Activated CD4-positive, alpha-beta T cell treated with anti-CD3 and anti-CD28 coated beads, Interleukin-2, amount 10 ng/mL, durations not matched to agents 24 days and 14 days (primary cell): ENCODE measurements at regions of chr1 and their contacts with region 1.

Region 1: GRCh38 chr1:161117759-161118581 is at the starts of genes NIT1 and PFDN2:
- DNase-seq: peak; percentile 97
- H3K4me3 Mint-ChIP-seq: peak within 1 kb of the TSS; percentile 98
- H3K27ac Mint-ChIP-seq: peak within 1 kb of the TSS; percentile 92
- H3K4me1 Mint-ChIP-seq: peaks cover 61% of the 10 kb centered on the region
- H3K27me3 Mint-ChIP-seq: no peaks in the 10 kb centered on the region
- total RNA-seq, gene NIT1: 46.7 and 48.2 TPM in 2 replicates
- total RNA-seq, gene PFDN2: 173 and 178 TPM in 2 replicates

Region 2: GRCh38 chr1:161080391-161081355 is 37.3 kb before region 1 on chr1:
- intact Hi-C with region 1: no loop called
- DNase-seq: no peak
- H3K4me3 Mint-ChIP-seq: no peak overlapping the region
- H3K27ac Mint-ChIP-seq: no peak overlapping the region
- H3K4me1 Mint-ChIP-seq: peaks cover 8% of the 10 kb centered on the region
- H3K27me3 Mint-ChIP-seq: no peaks in the 10 kb centered on the region

Region 3: DNA sequence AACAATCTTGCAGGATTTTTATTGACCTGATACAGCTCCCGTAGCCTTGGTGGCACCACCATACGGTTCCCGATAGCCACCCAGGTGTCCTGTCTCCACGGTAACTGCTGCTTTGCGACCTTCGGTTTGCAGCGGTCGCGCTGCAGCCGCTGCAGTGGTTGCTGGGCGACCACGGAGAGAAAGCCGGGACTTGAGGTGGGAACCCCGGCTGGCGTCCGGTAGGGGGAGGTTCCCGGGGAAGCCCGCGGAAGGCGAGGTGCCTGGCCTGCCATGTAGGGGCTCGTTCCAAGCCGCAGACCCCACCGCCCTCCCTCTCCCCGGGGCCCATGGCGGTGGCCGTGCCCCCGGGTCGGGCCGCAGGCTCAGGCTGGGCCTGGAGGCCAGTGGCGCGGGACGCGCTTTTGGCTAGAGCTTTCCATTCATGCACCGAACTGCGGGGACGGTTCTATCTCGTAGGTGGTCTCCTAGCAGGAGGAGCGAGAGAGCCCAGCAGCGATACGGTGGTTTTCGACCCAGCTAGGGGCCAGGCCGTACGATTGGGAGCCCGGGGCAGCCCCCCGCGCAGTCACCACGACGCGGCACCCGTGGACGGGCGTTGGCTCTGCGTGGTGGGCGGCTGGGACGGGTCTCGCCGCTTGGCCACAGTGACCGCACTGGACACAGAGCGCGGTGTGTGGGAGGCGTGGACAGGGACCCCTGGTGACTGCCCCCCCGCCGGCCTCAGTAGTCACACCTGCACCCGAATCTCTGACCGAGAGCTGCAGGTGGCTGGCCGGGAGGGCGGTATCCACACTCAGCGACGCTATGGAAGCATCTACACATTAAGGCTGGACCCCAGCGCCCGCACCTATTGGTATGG is 19.5 kb before region 1 on chr1 and contains the start of gene KLHDC9:
- intact Hi-C with region 1: loop called (anchors 2 kb)
- DNase-seq: peak; percentile 92
- H3K4me3 Mint-ChIP-seq: peak within 1 kb of the TSS; percentile 80
- H3K27ac Mint-ChIP-seq: peak within 1 kb of the TSS; percentile 93
- H3K4me1 Mint-ChIP-seq: peaks cover 39% of the 10 kb centered on the region
- H3K27me3 Mint-ChIP-seq: peaks cover 2% of the 10 kb centered on the region
- total RNA-seq, gene KLHDC9: not detected in 2 replicates

Region 4: DNA sequence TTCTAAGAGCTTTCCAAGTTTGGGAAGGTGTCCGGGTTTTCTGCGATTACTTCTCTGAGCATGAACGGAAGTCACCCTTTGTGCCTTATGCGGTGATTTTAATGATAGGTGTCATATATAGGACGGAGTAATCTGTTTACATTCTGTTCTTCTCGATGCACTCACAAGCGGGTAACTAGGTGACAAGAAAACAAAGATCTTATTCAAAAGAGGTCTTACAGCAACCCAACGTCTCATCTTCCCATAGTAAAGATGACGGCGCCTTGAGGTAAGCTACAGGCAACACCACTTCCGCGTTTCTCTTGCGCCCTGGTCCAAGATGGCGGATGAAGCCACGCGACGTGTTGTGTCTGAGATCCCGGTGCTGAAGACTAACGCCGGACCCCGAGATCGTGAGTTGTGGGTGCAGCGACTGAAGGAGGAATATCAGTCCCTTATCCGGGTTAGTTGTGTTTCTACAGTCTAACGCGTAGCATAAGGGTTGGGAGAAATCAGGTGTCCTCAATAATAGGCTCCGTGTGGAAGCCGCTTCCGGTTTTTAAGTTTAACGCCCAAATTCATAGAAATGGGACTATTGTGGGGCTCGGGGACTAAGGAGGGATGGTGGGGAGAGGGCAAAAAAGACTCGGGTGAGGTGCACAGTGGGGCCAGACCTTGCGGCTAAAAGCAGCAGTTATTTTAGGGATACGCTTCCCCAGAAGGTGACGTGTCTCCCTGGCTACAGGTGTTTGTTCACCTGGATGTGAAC is 35.9 kb after region 1 on chr1 and contains the start of gene UFC1:
- intact Hi-C with region 1: loop called (anchors 5 kb)
- DNase-seq: peak; percentile 95
- H3K4me3 Mint-ChIP-seq: peak within 1 kb of the TSS; percentile 97
- H3K27ac Mint-ChIP-seq: peak within 1 kb of the TSS; percentile 100
- H3K4me1 Mint-ChIP-seq: peaks cover 23% of the 10 kb centered on the region
- H3K27me3 Mint-ChIP-seq: no peaks in the 10 kb centered on the region
- total RNA-seq, gene UFC1: 84.2 and 86.6 TPM in 2 replicates